B cell (primary cell): ENCODE measurements at regions of chr15 and their contacts with region 1.

Region 1: GRCh38 chr15:59299929-59300617 is 72.6 kb downstream of the MYO1E start:
- DNase-seq: peak; percentile 92
- ATAC-seq: peak; percentile 89
- H3K4me3 ChIP-seq: peak overlapping the region in 2 of 5 experiments; percentile 16 to 26
- H3K4me3 Mint-ChIP-seq: peak overlapping the region; percentile 64
- H3K27ac ChIP-seq: peak overlapping the region; percentile 62 to 78
- H3K27ac Mint-ChIP-seq: peak overlapping the region; percentile 79
- H3K4me1 ChIP-seq: peaks cover 70 to 88% of the 10 kb centered on the region in 2 donors
- H3K4me1 Mint-ChIP-seq: peaks cover 84% of the 10 kb centered on the region
- H3K27me3 ChIP-seq: no peaks in the 10 kb centered on the region
- H3K27me3 Mint-ChIP-seq: no peaks in the 10 kb centered on the region
- CTCF ChIP-seq: no peak

Region 2: DNA sequence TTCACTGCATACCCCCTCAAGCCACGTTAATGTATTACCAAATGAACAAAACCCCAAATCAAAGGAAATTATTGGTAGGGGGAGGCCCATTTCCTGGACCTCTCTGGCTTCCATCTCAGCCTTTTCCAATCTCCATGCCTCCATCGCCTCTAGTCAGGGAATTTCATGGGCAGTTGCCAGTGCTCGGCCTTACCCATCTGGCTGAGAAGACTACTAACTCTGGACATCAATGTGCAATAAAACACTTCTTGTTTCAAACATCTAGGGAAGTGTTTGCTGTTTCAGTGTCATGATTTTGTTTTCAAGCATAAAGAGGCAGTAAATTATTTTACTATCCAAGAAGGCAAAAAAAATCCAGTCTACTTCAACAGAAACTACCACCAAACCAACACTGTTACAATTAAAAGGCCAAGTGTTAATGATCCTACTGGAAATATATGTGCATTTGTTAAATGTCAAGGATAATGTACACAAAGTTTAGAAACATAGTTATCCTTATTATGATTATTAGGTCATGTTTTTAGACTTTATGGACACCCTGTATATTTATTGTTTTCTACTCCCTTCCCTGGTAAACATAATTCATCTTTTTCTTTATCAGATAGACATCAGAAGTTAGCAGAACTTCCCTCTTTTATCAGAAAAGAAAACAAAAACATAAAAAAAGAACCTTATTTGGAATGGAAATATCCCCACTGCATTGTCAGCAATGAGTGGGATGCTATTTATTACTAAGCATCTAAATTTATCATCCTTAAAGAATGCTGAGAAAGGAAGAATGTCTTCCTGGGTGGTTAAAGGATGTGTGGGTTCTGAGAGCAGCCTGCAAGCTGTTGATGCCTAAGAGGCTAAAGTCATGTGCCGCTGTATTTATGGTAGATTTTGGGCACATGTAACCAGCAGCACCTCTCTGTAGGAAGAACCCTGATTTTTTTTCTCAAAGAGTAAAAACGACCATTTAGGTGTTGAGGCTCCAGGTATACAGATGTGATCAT is 78.3 kb before region 1 on chr15:
- CTCF ChIA-PET with region 1: no interaction called
- POLR2A ChIA-PET with region 1: no interaction called
- intact Hi-C with region 1: no loop called
- DNase-seq: no peak
- ATAC-seq: no peak
- H3K4me3 ChIP-seq: no peak overlapping the region
- H3K4me3 Mint-ChIP-seq: no peak overlapping the region
- H3K27ac ChIP-seq: no peak overlapping the region
- H3K27ac Mint-ChIP-seq: no peak overlapping the region
- H3K4me1 ChIP-seq: no peaks in the 10 kb centered on the region
- H3K4me1 Mint-ChIP-seq: no peaks in the 10 kb centered on the region
- H3K27me3 ChIP-seq: no peaks in the 10 kb centered on the region
- H3K27me3 Mint-ChIP-seq: no peaks in the 10 kb centered on the region
- CTCF ChIP-seq: no peak

Region 3: GRCh38 chr15:59329570-59330350 is 29.7 kb after region 1 on chr15:
- CTCF ChIA-PET with region 1: interaction called, 4 read pairs
- POLR2A ChIA-PET with region 1: no interaction called
- intact Hi-C with region 1: loop called (anchors 1 kb)
- DNase-seq: no peak
- ATAC-seq: no peak
- H3K4me3 ChIP-seq: no peak overlapping the region
- H3K4me3 Mint-ChIP-seq: peak overlapping the region; percentile 52
- H3K27ac ChIP-seq: no peak overlapping the region
- H3K27ac Mint-ChIP-seq: no peak overlapping the region
- H3K4me1 ChIP-seq: peaks cover 67 to 74% of the 10 kb centered on the region in 2 donors
- H3K4me1 Mint-ChIP-seq: peaks cover 84% of the 10 kb centered on the region
- H3K27me3 ChIP-seq: no peaks in the 10 kb centered on the region
- H3K27me3 Mint-ChIP-seq: no peaks in the 10 kb centered on the region
- CTCF ChIP-seq: no peak

Region 4: DNA sequence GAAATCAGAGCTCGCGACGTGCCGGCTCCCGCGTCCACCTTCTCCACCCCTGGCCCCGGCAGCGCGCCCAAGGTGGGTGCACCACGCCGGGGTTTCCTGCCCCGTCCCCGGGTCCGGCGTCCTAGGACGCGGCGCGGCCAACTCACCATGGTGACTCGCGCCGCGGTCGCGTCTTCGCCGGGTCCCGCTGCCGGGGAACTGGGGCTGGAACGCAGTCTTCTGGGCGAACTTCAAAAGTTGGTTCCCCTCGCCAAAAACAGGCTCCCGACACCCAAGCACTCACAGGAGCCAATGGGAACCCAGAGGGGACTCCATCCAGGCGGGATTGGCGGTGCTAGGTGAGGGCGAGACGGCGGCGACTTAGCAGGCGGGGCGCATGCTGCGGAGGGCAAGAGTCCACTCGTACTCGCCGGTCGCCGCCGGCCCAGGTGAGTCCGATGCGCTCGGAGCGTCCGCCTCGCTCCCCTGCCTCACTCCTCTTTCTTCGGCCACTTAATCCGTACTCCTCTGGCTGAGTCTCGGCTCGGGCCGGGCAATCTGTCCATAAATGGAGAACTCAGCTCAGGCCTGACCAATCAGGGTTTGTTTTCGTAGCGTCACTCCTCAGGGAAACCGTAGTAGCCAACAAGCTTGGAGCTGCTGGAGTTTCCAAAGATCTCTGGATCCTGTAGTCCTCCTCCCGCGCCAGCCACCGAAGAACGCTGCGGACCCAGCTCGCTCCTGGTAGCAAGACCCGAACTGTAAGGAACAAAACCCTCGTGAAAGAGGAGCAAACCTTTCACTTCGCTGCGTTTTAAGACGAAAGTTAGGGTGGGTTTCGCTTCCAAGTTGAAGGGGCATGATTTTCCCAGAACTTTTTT is 72.5 kb after region 1 on chr15 and contains the start of gene MYO1E:
- CTCF ChIA-PET with region 1: interaction called, 3 read pairs
- POLR2A ChIA-PET with region 1: interaction called, 6 read pairs
- intact Hi-C with region 1: loop called (anchors 1 kb)
- DNase-seq: peak; percentile 73
- ATAC-seq: peak; percentile 62
- H3K4me3 ChIP-seq: peak within 1 kb of the TSS; percentile 63 to 98 (median 85)
- H3K4me3 Mint-ChIP-seq: peak within 1 kb of the TSS; percentile 99
- H3K27ac ChIP-seq: peak within 1 kb of the TSS; percentile 72 to 77
- H3K27ac Mint-ChIP-seq: peak within 1 kb of the TSS; percentile 94
- H3K4me1 ChIP-seq: peaks cover 35 to 37% of the 10 kb centered on the region in 2 donors
- H3K4me1 Mint-ChIP-seq: peaks cover 53% of the 10 kb centered on the region
- H3K27me3 ChIP-seq: no peaks in the 10 kb centered on the region
- H3K27me3 Mint-ChIP-seq: no peaks in the 10 kb centered on the region
- CTCF ChIP-seq: no peak
- total RNA-seq, gene MYO1E: 100.0 and 111 TPM in 2 replicates

Region 5: DNA sequence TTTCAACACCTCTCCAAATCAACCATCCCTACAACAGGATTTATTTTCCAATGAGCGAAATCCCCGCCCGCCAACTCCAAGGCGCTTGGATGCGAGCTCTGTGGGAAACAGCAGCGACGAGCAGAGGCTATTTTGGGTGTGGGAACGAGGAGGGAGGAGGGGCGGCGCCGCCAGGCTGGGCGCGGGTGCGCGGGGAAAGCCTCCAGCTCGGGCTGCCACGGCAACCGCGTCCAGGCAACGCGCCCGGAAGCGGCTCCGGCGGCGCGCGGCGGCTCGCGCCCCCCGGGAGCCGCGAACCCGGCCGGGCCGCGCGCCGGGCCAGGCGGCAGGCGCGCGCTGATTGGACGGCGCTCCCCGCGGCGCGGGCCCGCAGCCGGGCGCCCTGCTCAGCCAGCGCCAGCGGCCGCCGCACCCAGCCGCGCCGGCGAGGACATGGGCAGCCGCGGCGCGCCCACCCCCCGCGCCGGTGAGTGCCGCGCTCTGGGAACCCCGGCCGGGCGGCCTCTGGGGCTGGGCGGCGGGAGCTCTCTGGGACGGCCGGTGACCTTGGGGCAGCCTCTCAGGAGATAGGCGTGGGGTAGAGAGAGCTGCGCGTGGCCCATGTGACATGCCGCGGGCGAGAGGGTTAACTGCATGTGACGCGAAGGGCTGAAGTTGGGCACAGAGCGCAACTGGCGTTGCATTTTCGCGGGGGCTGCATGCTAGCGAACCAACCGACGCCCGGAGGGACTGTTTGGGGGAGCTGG is 137.9 kb after region 1 on chr15 and contains the start of gene FAM81A:
- CTCF ChIA-PET with region 1: interaction called, 4 read pairs
- POLR2A ChIA-PET with region 1: interaction called, 8 read pairs
- intact Hi-C with region 1: loop called (anchors 1 kb)
- DNase-seq: peak; percentile 79
- ATAC-seq: peak; percentile 86
- H3K4me3 ChIP-seq: peak within 1 kb of the TSS; percentile 60 to 87 (median 71)
- H3K4me3 Mint-ChIP-seq: peak within 1 kb of the TSS; percentile 93
- H3K27ac ChIP-seq: no peak within 1 kb of the TSS
- H3K27ac Mint-ChIP-seq: peak within 1 kb of the TSS; percentile 80
- H3K4me1 ChIP-seq: peaks cover 22 to 30% of the 10 kb centered on the region in 2 donors
- H3K4me1 Mint-ChIP-seq: peaks cover 37% of the 10 kb centered on the region
- H3K27me3 ChIP-seq: peaks cover 0 to 4% (median 0%) of the 10 kb centered on the region in 4 experiments
- H3K27me3 Mint-ChIP-seq: peaks cover 5% of the 10 kb centered on the region
- CTCF ChIP-seq: no peak
- total RNA-seq, gene FAM81A: 3.8 and 3.9 TPM in 2 replicates

Region 6: GRCh38 chr15:59522988-59523461 is 223.0 kb after region 1 on chr15:
- CTCF ChIA-PET with region 1: interaction called, 5 read pairs
- POLR2A ChIA-PET with region 1: no interaction called
- intact Hi-C with region 1: loop called (anchors 5 kb)
- DNase-seq: peak; percentile 75
- ATAC-seq: peak; percentile 40
- H3K4me3 ChIP-seq: peak overlapping the region in 1 of 5 experiments; percentile 11
- H3K4me3 Mint-ChIP-seq: peak overlapping the region; percentile 77
- H3K27ac ChIP-seq: peak overlapping the region; percentile 72 to 94
- H3K27ac Mint-ChIP-seq: peak overlapping the region; percentile 93
- H3K4me1 ChIP-seq: peaks cover 63 to 64% of the 10 kb centered on the region in 2 donors
- H3K4me1 Mint-ChIP-seq: peaks cover 57% of the 10 kb centered on the region
- H3K27me3 ChIP-seq: no peaks in the 10 kb centered on the region
- H3K27me3 Mint-ChIP-seq: no peaks in the 10 kb centered on the region
- CTCF ChIP-seq: no peak